ENCODE measurements at regions of chr10 and their contacts with region 1.

Region 1: DNA sequence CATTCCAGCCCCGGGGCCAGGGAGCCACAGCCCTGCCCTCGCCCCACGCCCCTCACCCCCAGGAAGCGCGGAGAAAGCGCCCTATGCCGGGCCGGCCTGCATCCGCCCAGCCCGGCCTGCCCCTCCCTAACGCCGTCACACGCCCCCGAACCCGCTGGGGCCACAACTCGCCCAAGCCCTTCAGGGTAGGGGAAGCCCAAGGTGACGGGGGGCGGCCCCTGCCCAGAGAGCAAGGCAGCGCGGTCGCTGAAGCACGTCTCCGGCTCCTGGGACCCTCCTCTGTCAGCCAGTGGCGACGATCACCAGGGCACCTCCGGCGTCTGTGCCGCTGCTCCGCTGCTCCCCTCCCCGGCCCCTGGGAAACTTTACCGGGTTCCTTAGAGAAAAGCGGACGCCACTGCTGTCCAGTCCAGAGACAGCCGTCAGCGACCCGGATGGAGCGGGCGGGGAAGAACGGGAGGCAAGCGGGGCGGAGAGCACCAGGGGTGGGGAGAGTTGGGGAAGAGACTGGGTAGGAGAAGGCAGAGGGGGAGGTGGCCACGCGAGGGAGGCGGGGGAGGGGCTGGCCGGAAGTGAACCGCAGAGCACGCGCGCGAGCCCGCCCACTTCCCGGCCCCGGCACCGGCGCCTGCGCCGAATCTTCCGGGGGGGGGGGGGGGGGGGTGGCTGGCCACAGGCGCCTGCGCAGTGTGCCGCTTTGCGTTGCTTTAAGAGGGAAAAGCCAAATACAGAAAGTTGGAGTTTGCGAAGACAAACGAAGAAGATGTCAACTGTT is at the start of gene HERC4:
- DNase-seq: peak; percentile 94
- ATAC-seq: peak; percentile 83
- H3K4me3 Mint-ChIP-seq: peak within 1 kb of the TSS; percentile 98
- H3K27ac Mint-ChIP-seq: peak within 1 kb of the TSS; percentile 93
- H3K4me1 Mint-ChIP-seq: peaks cover 31% of the 10 kb centered on the region
- H3K27me3 Mint-ChIP-seq: no peaks in the 10 kb centered on the region
- total RNA-seq, gene HERC4: 39.5 to 50.8 TPM

Region 2: GRCh38 chr10:67884313-67884841 is 190.6 kb before region 1 on chr10 and contains the start of gene SIRT1:
- CTCF ChIA-PET with region 1: no interaction called
- POLR2A ChIA-PET with region 1: no interaction called
- intact Hi-C with region 1: loop called (anchors 1 kb)
- DNase-seq: peak; percentile 93
- ATAC-seq: peak; percentile 74
- H3K4me3 Mint-ChIP-seq: peak within 1 kb of the TSS; percentile 93
- H3K27ac Mint-ChIP-seq: peak within 1 kb of the TSS; percentile 93
- H3K4me1 Mint-ChIP-seq: peaks cover 25% of the 10 kb centered on the region
- H3K27me3 Mint-ChIP-seq: no peaks in the 10 kb centered on the region
- total RNA-seq, gene SIRT1: 19.6 to 23.5 TPM

Region 3: GRCh38 chr10:68023292-68023691 is 51.7 kb before region 1 on chr10:
- CTCF ChIA-PET with region 1: no interaction called
- POLR2A ChIA-PET with region 1: no interaction called
- intact Hi-C with region 1: no loop called
- DNase-seq: no peak
- ATAC-seq: peak; percentile 66
- H3K4me3 Mint-ChIP-seq: no peak overlapping the region
- H3K27ac Mint-ChIP-seq: no peak overlapping the region
- H3K4me1 Mint-ChIP-seq: peaks cover 3% of the 10 kb centered on the region
- H3K27me3 Mint-ChIP-seq: no peaks in the 10 kb centered on the region

Region 4: GRCh38 chr10:68284062-68285001 is 209.4 kb after region 1 on chr10:
- CTCF ChIA-PET with region 1: no interaction called
- POLR2A ChIA-PET with region 1: no interaction called
- intact Hi-C with region 1: no loop called
- DNase-seq: no peak
- ATAC-seq: no peak
- H3K4me3 Mint-ChIP-seq: no peak overlapping the region
- H3K27ac Mint-ChIP-seq: no peak overlapping the region
- H3K4me1 Mint-ChIP-seq: no peaks in the 10 kb centered on the region
- H3K27me3 Mint-ChIP-seq: no peaks in the 10 kb centered on the region